HEK293T (cell line): ENCODE measurements at regions of chr16 and their contacts with region 1.

Region 1: GRCh38 chr16:88856828-88857733 is at the starts of genes GALNS and TRAPPC2L:
- DNase-seq: peak; percentile 100

Region 2: GRCh38 chr16:88811769-88812512 is 45.1 kb before region 1 on chr16 and contains the start of gene APRT:
- CTCF ChIA-PET with region 1: interaction called, 4 read pairs
- POLR2A ChIA-PET with region 1: interaction called, 16 read pairs
- DNase-seq: peak; percentile 98

Region 3: GRCh38 chr16:88874938-88875599 is 18.0 kb after region 1 on chr16:
- CTCF ChIA-PET with region 1: no interaction called
- POLR2A ChIA-PET with region 1: no interaction called
- DNase-seq: no peak

Region 4: GRCh38 chr16:88967830-88968588 is 110.9 kb after region 1 on chr16:
- CTCF ChIA-PET with region 1: no interaction called
- POLR2A ChIA-PET with region 1: no interaction called
- DNase-seq: no peak